Calu3 (cell line): ENCODE measurements at regions of chr6 and their contacts with region 1.

Region 1: DNA sequence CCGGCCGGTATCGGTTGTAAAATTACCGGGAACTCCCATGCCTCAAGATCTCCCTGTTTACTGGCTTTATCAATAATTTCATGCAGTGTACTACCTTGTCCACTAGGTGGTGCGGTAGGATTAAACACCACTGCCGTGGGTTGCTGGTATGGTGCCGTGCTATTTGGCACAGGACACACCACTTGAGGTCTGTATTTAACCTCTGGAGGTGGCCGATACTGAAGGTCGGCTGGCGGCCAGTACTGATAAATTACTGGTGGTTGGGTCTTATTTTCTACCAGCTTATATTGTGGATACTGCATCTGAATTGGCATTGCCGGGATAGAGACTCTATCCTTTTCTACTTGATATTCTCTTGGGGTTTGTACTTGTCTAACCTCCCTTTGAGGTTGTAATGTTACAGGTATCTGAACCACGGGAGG is 14.3 kb upstream of the PTCRA start:
- DNase-seq: peak; percentile 89
- H3K4me3 Mint-ChIP-seq: no peak overlapping the region
- H3K27ac Mint-ChIP-seq: no peak overlapping the region
- H3K4me1 Mint-ChIP-seq: peaks cover 19% of the 10 kb centered on the region
- H3K27me3 Mint-ChIP-seq: peaks cover 21% of the 10 kb centered on the region
- CTCF ChIP-seq: peak; percentile 82

Region 2: GRCh38 chr6:42661540-42662153 is 239.9 kb before region 1 on chr6:
- CTCF ChIA-PET with region 1: interaction called, 3 read pairs
- intact Hi-C with region 1: loop called (anchors 2 kb)
- DNase-seq: peak; percentile 87
- H3K4me3 Mint-ChIP-seq: no peak overlapping the region
- H3K27ac Mint-ChIP-seq: peak overlapping the region; percentile 30
- H3K4me1 Mint-ChIP-seq: no peaks in the 10 kb centered on the region
- H3K27me3 Mint-ChIP-seq: no peaks in the 10 kb centered on the region
- CTCF ChIP-seq: peak; percentile 92

Region 3: DNA sequence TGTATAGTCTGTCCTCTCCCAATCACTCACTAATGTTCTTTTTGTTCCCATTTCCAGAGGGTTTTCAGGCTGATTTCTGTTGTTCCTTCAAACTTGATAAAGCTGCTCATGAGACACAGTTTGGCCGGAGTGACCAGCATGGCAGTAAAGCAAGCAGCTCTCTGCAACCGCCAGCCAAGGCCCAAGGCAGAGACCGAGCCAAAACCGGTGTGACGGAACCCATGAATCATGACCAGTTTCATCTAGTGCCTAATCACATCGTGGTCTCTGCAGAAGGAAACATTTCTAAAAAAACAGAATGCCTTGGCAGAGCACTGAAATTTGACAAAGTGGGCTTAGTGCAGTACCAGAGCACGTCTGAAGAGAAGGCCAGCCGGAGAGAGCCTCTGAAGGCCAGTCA is 36.9 kb before region 1 on chr6:
- CTCF ChIA-PET with region 1: no interaction called
- intact Hi-C with region 1: no loop called
- DNase-seq: no peak
- H3K4me3 Mint-ChIP-seq: no peak overlapping the region
- H3K27ac Mint-ChIP-seq: no peak overlapping the region
- H3K4me1 Mint-ChIP-seq: no peaks in the 10 kb centered on the region
- H3K27me3 Mint-ChIP-seq: no peaks in the 10 kb centered on the region
- CTCF ChIP-seq: no peak

Region 4: GRCh38 chr6:42915732-42916131 is 14.2 kb after region 1 on chr6 and contains the start of gene PTCRA:
- CTCF ChIA-PET with region 1: no interaction called
- intact Hi-C with region 1: no loop called
- DNase-seq: no peak
- H3K4me3 Mint-ChIP-seq: no peak within 1 kb of the TSS
- H3K27ac Mint-ChIP-seq: no peak within 1 kb of the TSS
- H3K4me1 Mint-ChIP-seq: no peaks in the 10 kb centered on the region
- H3K27me3 Mint-ChIP-seq: peaks cover 13% of the 10 kb centered on the region
- CTCF ChIP-seq: no peak
- total RNA-seq, gene PTCRA: not detected in 2 replicates

Region 5: DNA sequence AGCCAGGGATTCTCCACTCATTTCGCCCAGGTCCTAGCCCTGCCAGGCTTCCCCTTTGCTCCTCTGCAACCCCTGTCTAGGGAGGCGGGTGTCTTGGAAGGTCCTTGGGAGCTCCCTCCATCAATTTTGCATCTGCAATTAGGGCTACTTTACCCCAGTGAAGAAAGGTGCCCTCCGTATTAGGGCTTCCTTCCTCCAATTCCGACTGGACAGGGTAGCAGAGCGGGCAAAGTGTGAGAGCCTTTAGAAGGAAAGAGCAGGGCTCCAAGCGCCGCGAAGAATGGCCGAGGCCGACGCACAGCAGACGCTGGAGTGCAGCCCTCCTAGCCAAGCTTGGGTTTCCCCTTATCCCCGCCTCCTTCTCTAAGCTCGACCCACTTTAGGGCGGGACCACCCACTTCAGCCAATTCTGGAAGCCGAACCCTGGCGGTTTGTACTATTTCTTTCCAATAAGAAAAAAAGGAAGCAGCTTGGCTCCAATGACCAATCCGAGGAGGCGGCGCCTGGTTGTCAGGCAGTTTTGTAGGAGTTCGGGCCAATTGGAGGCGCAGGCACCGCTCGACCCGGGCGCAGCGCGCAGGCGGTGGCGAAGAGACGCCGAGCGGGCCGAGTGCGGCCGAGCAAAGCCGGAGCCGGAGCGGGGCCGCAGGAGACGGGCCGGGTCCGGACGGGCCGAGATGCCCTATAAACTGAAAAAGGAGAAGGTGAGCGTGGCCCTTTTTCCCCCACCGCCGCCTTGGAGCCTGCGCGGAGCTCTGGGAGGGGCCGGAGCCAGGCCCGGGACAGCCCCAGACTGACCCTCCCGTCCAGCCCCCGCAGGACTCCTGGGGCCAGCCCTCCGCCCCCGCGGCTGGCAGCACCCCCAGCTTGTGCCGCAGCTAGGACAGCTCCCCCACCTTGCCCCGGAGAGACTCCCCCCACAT is 82.7 kb after region 1 on chr6 and contains the start of gene PPP2R5D:
- CTCF ChIA-PET with region 1: no interaction called
- intact Hi-C with region 1: loop called (anchors 5 kb)
- DNase-seq: peak; percentile 99
- H3K4me3 Mint-ChIP-seq: peak within 1 kb of the TSS; percentile 84
- H3K27ac Mint-ChIP-seq: peak within 1 kb of the TSS; percentile 24
- H3K4me1 Mint-ChIP-seq: peaks cover 43% of the 10 kb centered on the region
- H3K27me3 Mint-ChIP-seq: no peaks in the 10 kb centered on the region
- CTCF ChIP-seq: no peak
- total RNA-seq, gene PPP2R5D: 49.4 and 55.8 TPM in 2 replicates

Region 6: GRCh38 chr6:42996513-42996912 is 95.0 kb after region 1 on chr6:
- CTCF ChIA-PET with region 1: no interaction called
- intact Hi-C with region 1: loop called (anchors 5 kb)
- DNase-seq: no peak
- H3K4me3 Mint-ChIP-seq: no peak overlapping the region
- H3K27ac Mint-ChIP-seq: no peak overlapping the region
- H3K4me1 Mint-ChIP-seq: no peaks in the 10 kb centered on the region
- H3K27me3 Mint-ChIP-seq: no peaks in the 10 kb centered on the region
- CTCF ChIP-seq: no peak

Region 7: GRCh38 chr6:43129434-43130194 is 228.1 kb after region 1 on chr6:
- CTCF ChIA-PET with region 1: interaction called, 3 read pairs
- intact Hi-C with region 1: loop called (anchors 1 kb)
- DNase-seq: peak; percentile 72
- H3K4me3 Mint-ChIP-seq: no peak overlapping the region
- H3K27ac Mint-ChIP-seq: no peak overlapping the region
- H3K4me1 Mint-ChIP-seq: peaks cover 8% of the 10 kb centered on the region
- H3K27me3 Mint-ChIP-seq: no peaks in the 10 kb centered on the region
- CTCF ChIP-seq: peak; percentile 73

Region 8: DNA sequence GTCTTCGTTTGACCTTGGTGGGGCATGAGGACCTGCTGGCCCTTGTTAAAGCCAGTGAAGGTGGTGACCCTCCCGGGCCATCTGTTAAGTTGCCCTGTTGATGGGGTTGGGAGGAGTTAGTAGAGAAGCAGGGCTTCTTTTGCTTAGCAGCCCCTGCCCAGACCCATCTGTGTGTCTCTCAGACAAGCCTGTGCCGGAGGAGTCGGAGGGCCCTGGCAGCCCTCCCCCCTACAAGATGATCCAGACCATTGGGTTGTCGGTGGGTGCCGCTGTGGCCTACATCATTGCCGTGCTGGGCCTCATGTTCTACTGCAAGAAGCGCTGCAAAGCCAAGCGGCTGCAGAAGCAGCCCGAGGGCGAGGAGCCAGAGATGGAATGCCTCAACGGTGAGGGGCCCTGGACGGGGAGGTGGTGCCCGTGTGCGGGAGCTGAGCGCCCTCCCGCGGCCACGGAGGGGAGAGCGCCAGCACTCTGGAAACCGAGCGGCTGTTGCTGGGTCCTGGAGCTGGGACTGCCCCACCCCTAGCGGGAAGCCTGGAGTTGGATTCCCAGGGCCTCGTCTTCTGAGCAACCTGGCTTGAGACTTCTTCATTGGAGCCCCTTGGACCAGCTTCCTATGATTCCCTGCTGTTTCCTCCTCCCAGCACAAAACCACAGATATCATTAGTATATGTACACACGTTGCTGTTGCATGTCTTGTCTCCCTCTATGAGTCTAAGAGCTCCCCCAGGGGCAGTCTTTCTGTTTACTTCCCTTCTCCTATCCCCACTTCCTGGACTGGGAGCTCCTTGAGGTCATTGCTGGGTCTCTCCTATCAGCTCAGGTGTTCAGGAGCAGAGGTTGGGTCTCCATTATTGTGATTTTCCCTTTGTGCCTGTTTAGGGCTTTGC is 241.9 kb after region 1 on chr6:
- CTCF ChIA-PET with region 1: no interaction called
- intact Hi-C with region 1: loop called (anchors 1 kb)
- DNase-seq: peak; percentile 94
- H3K4me3 Mint-ChIP-seq: no peak overlapping the region
- H3K27ac Mint-ChIP-seq: peak overlapping the region; percentile 7
- H3K4me1 Mint-ChIP-seq: peaks cover 9% of the 10 kb centered on the region
- H3K27me3 Mint-ChIP-seq: no peaks in the 10 kb centered on the region
- CTCF ChIP-seq: peak; percentile 98

Region 9: DNA sequence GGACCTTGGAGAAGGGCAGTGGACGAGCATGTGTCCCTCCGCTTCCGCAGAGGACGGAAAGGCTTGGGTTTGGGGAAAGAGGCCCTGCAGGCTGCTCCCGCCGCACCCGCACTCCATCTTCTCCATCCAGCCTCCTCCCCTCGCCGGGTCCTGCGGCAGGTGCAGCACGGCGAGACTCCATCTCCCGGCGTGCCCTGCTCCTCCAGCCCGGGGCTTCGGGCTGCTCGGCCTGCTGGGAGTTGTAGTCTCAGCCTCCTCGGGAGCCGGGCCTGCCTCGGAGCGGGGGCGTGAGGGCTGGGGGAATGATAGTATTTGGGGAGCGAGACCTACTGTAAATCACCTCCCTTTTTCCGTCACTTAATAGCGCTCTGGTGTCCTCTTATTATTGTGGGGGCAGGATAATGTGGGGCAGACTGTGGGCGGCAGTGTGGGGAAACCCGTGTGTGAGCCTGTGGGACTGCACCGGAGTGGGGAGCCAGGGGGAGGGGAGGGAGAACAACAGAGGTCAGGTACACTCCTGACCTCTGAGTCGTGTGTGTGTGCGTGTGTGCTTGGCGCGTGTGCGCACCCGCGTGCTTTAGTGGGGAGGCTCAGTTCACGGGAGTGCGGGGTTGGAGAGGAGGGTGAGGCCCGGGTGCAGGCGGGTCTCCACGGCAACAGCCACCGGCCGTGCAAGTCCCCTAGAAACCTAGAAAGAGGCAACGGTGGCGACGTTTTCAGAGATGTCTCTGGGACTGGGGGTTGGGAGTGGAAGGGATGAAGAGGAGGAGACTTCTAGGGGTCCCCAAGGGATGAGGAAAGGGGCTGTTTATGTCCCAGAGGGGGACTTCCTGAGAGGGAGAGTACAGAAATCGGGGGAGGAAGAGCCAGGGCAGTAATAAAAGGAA is 345.8 kb after region 1 on chr6:
- CTCF ChIA-PET with region 1: no interaction called
- intact Hi-C with region 1: no loop called
- DNase-seq: peak; percentile 94
- H3K4me3 Mint-ChIP-seq: peak overlapping the region; percentile 73
- H3K27ac Mint-ChIP-seq: peak overlapping the region; percentile 32
- H3K4me1 Mint-ChIP-seq: peaks cover 15% of the 10 kb centered on the region
- H3K27me3 Mint-ChIP-seq: peaks cover 33% of the 10 kb centered on the region
- CTCF ChIP-seq: no peak